ENCODE measurements at regions of chr12 and their contacts with region 1.

Region 1: GRCh38 chr12:105922670-105923102 is 216.1 kb downstream of the NUAK1 start:
- DNase-seq: no peak
- ATAC-seq: peak; percentile 82

Region 2: DNA sequence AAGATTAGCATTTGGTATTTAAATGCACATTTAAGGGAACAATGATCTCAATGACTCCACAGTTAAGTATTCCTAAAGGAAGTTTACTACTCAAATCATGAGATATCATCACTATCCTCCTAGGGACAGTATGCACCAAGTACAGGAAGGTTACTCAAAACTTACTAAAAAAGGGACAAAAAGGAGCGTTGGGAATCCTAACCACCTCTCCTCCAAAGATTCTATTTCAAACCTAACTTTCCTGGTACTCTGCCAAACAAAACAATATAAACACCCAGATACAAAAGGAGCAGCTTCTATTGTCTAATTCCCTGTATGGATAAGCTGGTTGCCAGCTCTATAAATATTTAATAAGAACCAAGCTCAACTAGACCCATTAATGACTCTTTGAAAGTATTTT is 161.6 kb before region 1 on chr12:
- intact Hi-C with region 1: no loop called
- DNase-seq: no peak
- ATAC-seq: no peak

Region 3: GRCh38 chr12:105820429-105821140 is 102.1 kb before region 1 on chr12:
- intact Hi-C with region 1: loop called (anchors 5 kb)
- DNase-seq: no peak
- ATAC-seq: peak; percentile 82

Region 4: GRCh38 chr12:105946493-105946901 is 23.8 kb after region 1 on chr12:
- intact Hi-C with region 1: loop called (anchors 2 kb)
- DNase-seq: peak; percentile 73
- ATAC-seq: peak; percentile 91

Region 5: GRCh38 chr12:105967038-105967776 is 44.5 kb after region 1 on chr12:
- intact Hi-C with region 1: loop called (anchors 5 kb)
- DNase-seq: no peak
- ATAC-seq: peak; percentile 68

Region 6: DNA sequence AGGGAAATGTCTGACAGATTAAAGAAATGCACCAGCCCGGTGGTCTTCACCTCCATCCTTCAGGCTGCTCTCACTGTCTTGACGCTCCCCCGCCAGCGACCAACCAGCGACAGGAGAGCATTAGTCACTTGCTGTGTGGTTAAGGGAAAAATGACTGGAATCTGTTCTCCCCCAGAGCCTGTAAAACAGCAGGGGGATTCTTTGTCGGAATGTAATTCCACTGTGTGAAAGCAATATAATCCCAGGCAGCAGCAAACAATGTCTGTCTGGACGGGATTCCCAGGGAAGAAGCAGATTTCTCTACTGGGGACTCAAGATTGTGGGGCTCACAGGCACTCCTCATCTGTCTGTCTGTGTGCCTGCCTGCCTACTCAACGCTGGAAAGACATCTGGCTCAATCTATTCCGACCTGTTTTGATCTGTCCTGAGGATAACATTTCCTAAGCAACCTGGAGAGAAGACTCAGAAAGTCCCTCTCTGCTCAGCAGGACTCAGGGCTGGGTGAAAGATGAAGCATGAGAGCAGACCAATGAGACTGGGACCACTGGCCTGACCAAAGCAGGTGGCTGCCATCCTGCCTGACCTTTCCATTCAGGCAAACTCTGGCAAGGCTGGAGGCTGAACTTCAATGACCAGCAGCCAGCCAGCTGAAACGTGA is 161.5 kb after region 1 on chr12:
- intact Hi-C with region 1: loop called (anchors 5 kb)
- DNase-seq: no peak
- ATAC-seq: no peak

Region 7: GRCh38 chr12:106108185-106108835 is 185.6 kb after region 1 on chr12:
- intact Hi-C with region 1: no loop called
- DNase-seq: no peak
- ATAC-seq: peak; percentile 40